Heart left ventricle (tissue), 16 donors: ENCODE measurements at regions of chr4 and their contacts with region 1.

Region 1: GRCh38 chr4:80279751-80280150 is 13.3 kb downstream of the FGF5 start:
- DNase-seq: no peak
- ATAC-seq: no peak
- H3K4me3 ChIP-seq: no peak overlapping the region
- H3K27ac ChIP-seq: no peak overlapping the region
- H3K4me1 ChIP-seq: no peaks in the 10 kb centered on the region
- H3K27me3 ChIP-seq: peaks cover 0 to 5% (median 0%) of the 10 kb centered on the region in 9 donors
- CTCF ChIP-seq: no peak
- POLR2A ChIP-seq: no peak

Region 2: GRCh38 chr4:79882806-79883205 is 396.9 kb before region 1 on chr4:
- intact Hi-C with region 1: loop called in 1 of 10 experiments (anchors 5 kb)
- DNase-seq: no peak
- ATAC-seq: no peak
- H3K4me3 ChIP-seq: no peak overlapping the region
- H3K27ac ChIP-seq: no peak overlapping the region
- H3K4me1 ChIP-seq: no peaks in the 10 kb centered on the region
- H3K27me3 ChIP-seq: no peaks in the 10 kb centered on the region
- CTCF ChIP-seq: no peak
- POLR2A ChIP-seq: no peak